CD8-positive, alpha-beta memory T cell (primary cell): ENCODE measurements at regions of chr3 and their contacts with region 1.

Region 1: DNA sequence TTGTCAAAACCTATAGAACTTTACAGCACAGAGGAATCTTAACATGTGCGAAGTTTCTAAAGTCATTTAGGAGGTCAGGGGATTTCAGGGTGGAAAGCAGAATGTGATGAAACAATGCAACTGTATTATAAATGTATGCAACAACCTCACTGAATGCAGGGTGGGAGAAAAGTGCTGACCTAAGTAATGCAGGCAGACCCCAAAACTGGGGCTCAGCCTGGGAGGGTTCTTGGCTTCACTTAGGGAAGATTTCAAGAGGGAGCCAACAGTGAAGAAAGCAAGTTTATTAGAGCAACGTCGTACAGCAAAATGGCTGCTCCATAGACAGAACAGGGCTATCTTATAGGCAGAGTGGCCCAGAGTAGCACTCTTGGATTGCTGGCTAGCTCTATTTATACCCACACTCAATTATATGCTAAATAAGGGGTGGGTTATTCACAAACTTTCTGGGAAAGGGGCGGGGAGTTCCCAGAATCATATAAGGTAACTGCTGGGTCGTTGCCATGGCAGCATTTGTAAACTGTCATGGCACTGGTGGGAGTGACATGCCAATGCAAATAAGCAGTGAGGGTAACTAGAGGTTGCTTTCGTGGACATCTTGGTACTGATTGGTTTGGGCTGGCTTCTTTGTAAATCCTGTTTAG is 14.2 kb upstream of the CAND2 start:
- DNase-seq: no peak
- H3K4me3 ChIP-seq: no peak overlapping the region
- H3K4me3 Mint-ChIP-seq: no peak overlapping the region
- H3K27ac ChIP-seq: no peak overlapping the region
- H3K27ac Mint-ChIP-seq: no peak overlapping the region
- H3K4me1 ChIP-seq: no peaks in the 10 kb centered on the region
- H3K4me1 Mint-ChIP-seq: peaks cover 0 to under 1% (median 0%) of the 10 kb centered on the region in 3 donors
- H3K27me3 ChIP-seq: no peaks in the 10 kb centered on the region
- H3K27me3 Mint-ChIP-seq: peaks cover 11 to 55% of the 10 kb centered on the region in 2 donors

Region 2: GRCh38 chr3:12719984-12720898 is 62.1 kb before region 1 on chr3:
- CTCF ChIA-PET with region 1: no interaction called
- POLR2A ChIA-PET with region 1: no interaction called
- DNase-seq: peak; percentile 43 to 83 (median 73)
- H3K4me3 ChIP-seq: no peak overlapping the region
- H3K4me3 Mint-ChIP-seq: peak overlapping the region; percentile 49 to 83 (median 74)
- H3K27ac ChIP-seq: no peak overlapping the region
- H3K27ac Mint-ChIP-seq: peak overlapping the region in 7 of 8 donors; percentile 9 to 96 (median 89)
- H3K4me1 ChIP-seq: peaks cover 4% of the 10 kb centered on the region
- H3K4me1 Mint-ChIP-seq: peaks cover 10 to 15% (median 10%) of the 10 kb centered on the region in 3 donors
- H3K27me3 ChIP-seq: no peaks in the 10 kb centered on the region
- H3K27me3 Mint-ChIP-seq: peaks cover 5% of the 10 kb centered on the region in 2 donors

Region 3: DNA sequence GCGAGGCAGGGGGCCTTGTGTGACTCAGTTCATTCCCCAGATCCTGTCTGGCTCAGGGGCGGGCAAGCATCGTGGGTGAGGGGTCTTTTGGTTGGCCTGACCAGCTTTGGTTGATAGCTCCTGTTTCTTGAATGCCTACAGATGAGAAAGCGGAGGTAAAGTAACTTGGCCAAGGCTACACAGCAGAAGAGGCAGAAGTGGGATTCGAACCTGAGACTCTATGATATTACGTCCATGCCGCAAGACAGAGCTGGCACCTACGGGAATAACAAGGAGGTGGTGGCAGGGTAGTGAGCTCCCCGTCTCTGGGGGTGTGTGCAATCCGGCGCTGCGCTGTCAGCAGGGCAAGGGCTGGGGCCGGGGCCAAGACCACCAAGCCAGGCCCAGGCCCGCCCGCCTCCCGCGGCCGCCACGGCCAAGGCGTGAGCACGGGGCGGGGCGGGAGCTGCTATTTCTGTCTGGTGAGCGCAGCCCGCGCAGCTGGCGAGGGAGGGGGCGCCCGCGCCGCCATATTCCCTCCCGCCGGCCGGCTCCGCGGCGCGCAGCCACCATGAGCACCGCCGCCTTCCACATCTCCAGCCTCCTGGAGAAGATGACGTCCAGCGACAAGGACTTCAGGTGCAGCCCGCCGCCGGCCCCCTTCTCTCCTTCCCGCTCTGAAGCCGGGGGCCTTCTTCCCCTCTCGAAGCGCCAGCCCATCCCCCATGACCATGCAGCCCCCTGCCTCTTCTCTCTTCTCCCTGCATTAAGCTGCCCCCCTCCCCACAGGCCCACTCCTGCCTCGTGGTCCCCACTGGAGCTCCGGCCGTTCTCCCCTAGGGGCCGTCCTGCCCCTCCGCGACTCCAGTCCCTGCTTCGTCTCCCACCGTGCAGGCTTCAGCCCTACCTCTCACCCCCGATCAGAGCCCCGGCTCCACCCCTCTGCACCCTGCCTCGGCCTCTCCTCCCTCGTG is 14.2 kb after region 1 on chr3 and contains the start of gene CAND2:
- CTCF ChIA-PET with region 1: interaction called, 38 read pairs
- POLR2A ChIA-PET with region 1: no interaction called
- DNase-seq: peak in 4 of 5 donors; percentile 12 to 58 (median 39)
- H3K4me3 ChIP-seq: peak within 1 kb of the TSS; percentile 62
- H3K4me3 Mint-ChIP-seq: peak within 1 kb of the TSS; percentile 85 to 94 (median 89)
- H3K27ac ChIP-seq: peak within 1 kb of the TSS; percentile 47
- H3K27ac Mint-ChIP-seq: peak within 1 kb of the TSS in 6 of 8 donors; percentile 29 to 82 (median 78)
- H3K4me1 ChIP-seq: peaks cover 6% of the 10 kb centered on the region
- H3K4me1 Mint-ChIP-seq: peaks cover 8 to 23% (median 8%) of the 10 kb centered on the region in 3 donors
- H3K27me3 ChIP-seq: peaks cover 5% of the 10 kb centered on the region
- H3K27me3 Mint-ChIP-seq: peaks cover 9 to 19% of the 10 kb centered on the region in 2 donors
- total RNA-seq, gene CAND2: 1.0 to 1.1 TPM

Region 4: DNA sequence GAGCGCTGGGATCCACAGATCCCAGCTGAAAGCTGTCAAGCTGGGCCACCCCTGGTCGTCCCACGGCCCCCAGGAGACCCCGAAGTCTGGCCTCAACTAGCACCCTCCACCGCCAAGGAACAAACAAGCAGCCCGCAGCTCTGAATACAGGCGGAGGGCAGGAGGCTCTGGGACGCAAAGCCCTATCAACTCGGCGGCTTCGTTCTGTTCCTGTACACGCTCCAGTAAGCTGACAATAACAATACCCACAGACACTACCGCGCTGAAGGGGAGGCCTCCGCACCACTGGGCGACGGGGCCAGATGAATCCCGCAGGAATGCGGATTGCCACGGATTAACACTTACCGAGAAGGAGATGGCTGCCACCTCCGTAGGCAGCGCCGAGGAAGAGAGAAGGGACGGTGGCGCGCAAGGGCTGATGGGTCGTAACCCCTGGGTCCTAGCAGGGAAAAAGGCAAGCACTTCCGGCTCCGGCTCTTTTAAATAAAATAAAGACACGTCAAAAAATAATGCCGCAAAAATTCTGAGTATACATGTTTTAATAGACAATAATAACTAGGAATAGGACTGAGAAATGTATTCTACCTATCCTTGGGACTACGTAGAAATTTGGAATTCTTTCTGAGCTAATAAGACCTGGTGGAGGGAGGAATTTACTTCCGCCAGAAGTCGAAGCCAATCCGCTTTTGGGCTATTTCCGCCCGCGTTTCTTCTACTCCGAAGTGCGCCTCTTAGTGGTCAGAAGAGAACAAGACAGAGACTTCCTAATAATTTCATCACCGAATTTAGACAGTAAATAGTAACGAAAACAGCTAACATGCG is 59.1 kb after region 1 on chr3 and contains the start of gene RPL32:
- CTCF ChIA-PET with region 1: interaction called, 25 read pairs
- POLR2A ChIA-PET with region 1: interaction called, 4 read pairs
- DNase-seq: peak; percentile 76 to 91 (median 88)
- H3K4me3 ChIP-seq: peak within 1 kb of the TSS; percentile 69
- H3K4me3 Mint-ChIP-seq: peak within 1 kb of the TSS; percentile 94 to 98 (median 97)
- H3K27ac ChIP-seq: peak within 1 kb of the TSS; percentile 99
- H3K27ac Mint-ChIP-seq: peak within 1 kb of the TSS; percentile 98 to 100 (median 100)
- H3K4me1 ChIP-seq: peaks cover 43% of the 10 kb centered on the region
- H3K4me1 Mint-ChIP-seq: peaks cover 36 to 51% (median 50%) of the 10 kb centered on the region in 3 donors
- H3K27me3 ChIP-seq: no peaks in the 10 kb centered on the region
- H3K27me3 Mint-ChIP-seq: peaks cover 0 to 1% of the 10 kb centered on the region in 2 donors
- total RNA-seq, gene RPL32: 2,528 to 2,642 TPM

Region 5: GRCh38 chr3:12891985-12892839 is 109.9 kb after region 1 on chr3:
- CTCF ChIA-PET with region 1: interaction called, 52 read pairs
- POLR2A ChIA-PET with region 1: interaction called, 4 read pairs
- DNase-seq: peak in 4 of 5 donors; percentile 32 to 58 (median 47)
- H3K4me3 ChIP-seq: peak overlapping the region; percentile 38
- H3K4me3 Mint-ChIP-seq: peak overlapping the region in 6 of 7 donors; percentile 12 to 74 (median 46)
- H3K27ac ChIP-seq: no peak overlapping the region
- H3K27ac Mint-ChIP-seq: peak overlapping the region in 1 of 8 donors; percentile 42
- H3K4me1 ChIP-seq: peaks cover 11% of the 10 kb centered on the region
- H3K4me1 Mint-ChIP-seq: peaks cover 11 to 19% (median 12%) of the 10 kb centered on the region in 3 donors
- H3K27me3 ChIP-seq: no peaks in the 10 kb centered on the region
- H3K27me3 Mint-ChIP-seq: peaks cover 6 to 28% of the 10 kb centered on the region in 2 donors

Region 6: GRCh38 chr3:14001136-14001535 is 1218.8 kb after region 1 on chr3:
- CTCF ChIA-PET with region 1: no interaction called
- POLR2A ChIA-PET with region 1: no interaction called
- DNase-seq: no peak
- H3K4me3 ChIP-seq: no peak overlapping the region
- H3K4me3 Mint-ChIP-seq: no peak overlapping the region
- H3K27ac ChIP-seq: no peak overlapping the region
- H3K27ac Mint-ChIP-seq: no peak overlapping the region
- H3K4me1 ChIP-seq: no peaks in the 10 kb centered on the region
- H3K4me1 Mint-ChIP-seq: no peaks in the 10 kb centered on the region
- H3K27me3 ChIP-seq: no peaks in the 10 kb centered on the region
- H3K27me3 Mint-ChIP-seq: peaks cover 12 to 21% of the 10 kb centered on the region in 2 donors

Region 7: GRCh38 chr3:14178247-14179113 is 1396.2 kb after region 1 on chr3 and contains the starts of genes LSM3 and XPC:
- CTCF ChIA-PET with region 1: no interaction called
- POLR2A ChIA-PET with region 1: no interaction called
- DNase-seq: peak; percentile 96 to 100 (median 98)
- H3K4me3 ChIP-seq: peak within 1 kb of the TSS; percentile 79
- H3K4me3 Mint-ChIP-seq: peak within 1 kb of the TSS; percentile 92 to 100 (median 98)
- H3K27ac ChIP-seq: peak within 1 kb of the TSS; percentile 96
- H3K27ac Mint-ChIP-seq: peak within 1 kb of the TSS; percentile 94 to 100 (median 99)
- H3K4me1 ChIP-seq: peaks cover 44% of the 10 kb centered on the region
- H3K4me1 Mint-ChIP-seq: peaks cover 58 to 82% (median 79%) of the 10 kb centered on the region in 3 donors
- H3K27me3 ChIP-seq: no peaks in the 10 kb centered on the region
- H3K27me3 Mint-ChIP-seq: peaks cover 0 to 2% of the 10 kb centered on the region in 2 donors
- total RNA-seq, gene LSM3: 25.8 to 26.6 TPM
- total RNA-seq, gene XPC: 38.8 to 38.9 TPM